AG04449 (cell line): ENCODE measurements at regions of chr3 and their contacts with region 1.

Region 1: GRCh38 chr3:149771652-149772271 is 19.5 kb upstream of the COMMD2 start:
- DNase-seq: no peak
- H3K4me3 ChIP-seq: no peak overlapping the region
- CTCF ChIP-seq: peak; percentile 72

Region 2: GRCh38 chr3:149224736-149225594 is 546.8 kb before region 1 on chr3:
- CTCF ChIA-PET with region 1: no interaction called
- POLR2A ChIA-PET with region 1: no interaction called
- DNase-seq: peak; percentile 59
- H3K4me3 ChIP-seq: peak overlapping the region; percentile 23
- CTCF ChIP-seq: no peak

Region 3: GRCh38 chr3:149494022-149494758 is 277.6 kb before region 1 on chr3:
- CTCF ChIA-PET with region 1: interaction called, 42 read pairs
- POLR2A ChIA-PET with region 1: no interaction called
- DNase-seq: no peak
- H3K4me3 ChIP-seq: no peak overlapping the region
- CTCF ChIP-seq: peak; percentile 83

Region 4: DNA sequence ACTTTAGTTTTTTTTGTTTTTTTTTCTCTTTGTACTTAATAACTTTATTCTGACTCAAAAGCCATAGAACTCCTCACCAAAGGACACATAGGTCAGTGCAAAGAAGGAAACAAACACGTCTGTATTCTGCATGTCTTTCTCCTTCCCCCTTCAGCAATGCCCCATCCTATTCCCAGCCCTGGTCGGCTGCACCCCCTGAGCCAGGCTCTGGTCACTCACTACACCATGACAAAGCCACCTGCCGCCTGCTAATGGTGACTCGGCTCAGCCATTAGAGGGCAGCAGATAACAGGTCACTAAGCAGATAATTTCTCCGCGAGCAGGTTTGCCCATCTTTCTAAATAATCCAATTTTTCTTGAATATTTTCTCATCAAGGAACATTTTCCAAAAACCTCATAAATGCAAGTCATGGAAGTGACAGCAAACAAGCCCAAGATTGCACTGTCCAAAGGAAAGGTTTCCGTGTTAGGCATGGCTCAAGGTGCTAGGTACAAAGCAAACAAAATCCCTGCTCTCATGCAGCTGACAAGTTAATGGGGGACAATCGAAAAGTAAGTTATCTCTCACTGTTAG is 259.5 kb before region 1 on chr3:
- CTCF ChIA-PET with region 1: interaction called, 92 read pairs
- POLR2A ChIA-PET with region 1: no interaction called
- DNase-seq: no peak
- H3K4me3 ChIP-seq: no peak overlapping the region
- CTCF ChIP-seq: peak; percentile 75

Region 5: DNA sequence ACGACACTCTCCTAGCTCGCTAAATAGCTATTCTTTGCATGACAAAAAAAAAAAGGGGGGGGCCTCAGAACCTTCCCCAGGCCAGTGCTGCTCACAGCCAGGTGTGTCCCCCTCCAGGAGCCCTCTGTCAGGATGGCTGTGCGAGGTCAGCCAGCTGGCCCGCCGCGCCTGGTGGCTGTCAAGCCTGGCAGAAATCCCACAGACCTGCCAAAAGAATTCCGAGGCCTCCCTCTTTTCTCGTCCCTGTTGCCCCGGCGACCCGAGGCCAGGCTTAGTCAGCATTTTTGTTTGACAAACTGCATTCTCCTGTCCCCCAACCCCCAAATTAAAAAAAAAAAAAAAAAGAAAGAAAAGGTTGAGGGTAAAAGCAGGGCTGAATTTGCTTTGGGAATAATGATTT is 235.3 kb before region 1 on chr3:
- CTCF ChIA-PET with region 1: interaction called, 18 read pairs
- POLR2A ChIA-PET with region 1: no interaction called
- DNase-seq: no peak
- H3K4me3 ChIP-seq: no peak overlapping the region
- CTCF ChIP-seq: no peak

Region 6: DNA sequence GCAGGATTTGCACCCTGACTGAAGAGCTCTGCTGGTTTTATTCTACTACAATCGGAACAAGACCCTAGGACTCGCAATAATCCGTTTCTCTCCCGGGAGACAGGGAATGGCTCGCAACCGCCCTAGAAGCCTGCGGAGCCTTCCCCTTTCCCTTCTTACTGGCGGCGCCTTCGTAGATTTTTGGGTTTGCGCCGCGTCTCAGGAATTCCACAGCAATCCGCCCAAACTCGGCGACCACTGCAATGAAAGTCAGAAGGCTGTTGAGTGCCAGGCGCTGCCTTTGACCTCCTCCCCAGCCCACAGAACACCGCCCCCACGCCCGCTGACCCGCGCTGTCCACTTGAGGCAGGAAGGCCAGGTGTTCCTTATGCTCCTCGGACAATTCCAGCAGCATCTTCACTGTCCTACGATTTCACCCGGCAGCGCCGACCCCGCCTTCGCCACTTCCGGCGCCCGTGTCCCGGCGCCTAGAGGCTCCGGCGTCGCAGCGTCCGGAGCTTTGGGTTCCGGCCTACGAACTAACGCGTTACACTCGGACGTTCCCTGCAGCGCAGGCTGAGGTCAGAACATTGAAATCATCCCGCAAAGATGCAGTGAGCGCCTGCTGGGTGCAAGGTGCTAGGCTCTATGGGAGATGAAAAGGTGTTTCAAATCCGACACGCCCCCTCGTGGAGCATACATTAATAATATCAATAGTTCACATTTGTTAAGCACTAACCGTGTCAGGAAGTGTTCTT is 19.5 kb before region 1 on chr3 and contains the start of gene COMMD2:
- CTCF ChIA-PET with region 1: interaction called, 45 read pairs
- POLR2A ChIA-PET with region 1: no interaction called
- DNase-seq: no peak
- H3K4me3 ChIP-seq: peak within 1 kb of the TSS; percentile 98
- CTCF ChIP-seq: no peak

Region 7: GRCh38 chr3:149801639-149802038 is 29.9 kb after region 1 on chr3:
- CTCF ChIA-PET with region 1: interaction called, 369 read pairs
- POLR2A ChIA-PET with region 1: no interaction called
- DNase-seq: no peak
- H3K4me3 ChIP-seq: no peak overlapping the region
- CTCF ChIP-seq: no peak